ENCODE measurements at regions of chr17 and their contacts with region 1.

Region 1: DNA sequence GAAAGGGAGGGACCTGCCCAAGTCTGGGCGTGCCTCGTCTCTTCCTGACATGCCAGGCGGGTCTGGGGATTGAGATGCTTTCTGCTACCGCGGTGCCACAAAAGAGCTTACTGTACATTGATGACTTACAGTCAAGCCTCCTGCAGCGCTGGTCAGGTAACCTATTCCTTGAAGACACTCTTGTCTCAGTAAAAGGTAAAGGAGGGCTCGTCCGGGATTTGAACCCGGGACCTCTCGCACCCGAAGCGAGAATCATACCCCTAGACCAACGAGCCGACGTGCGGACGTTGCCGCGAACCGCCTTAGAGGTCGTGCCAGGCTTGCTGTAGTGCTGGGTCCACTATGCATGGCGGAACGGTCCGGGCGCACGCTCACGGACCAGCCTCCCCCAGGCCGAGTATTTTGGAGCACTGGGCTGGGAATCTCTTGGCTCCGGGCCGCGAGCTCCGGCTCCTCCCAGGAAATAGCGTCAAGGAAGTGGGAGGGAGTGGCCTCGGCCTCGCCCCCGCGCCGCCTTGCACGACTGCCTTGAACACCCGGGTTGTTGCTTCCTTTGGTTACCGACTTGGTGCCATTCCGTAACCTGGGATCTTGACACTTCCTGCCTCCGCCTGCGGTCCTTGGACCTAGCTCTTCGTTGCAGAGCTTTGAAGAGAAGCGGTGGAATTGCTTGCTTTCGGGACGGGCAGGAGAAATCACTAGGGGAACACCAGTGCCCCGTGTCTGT is 12.4 kb upstream of the AURKB start:
- DNase-seq: peak; percentile 93
- ATAC-seq: peak; percentile 40
- H3K4me3 ChIP-seq: peak overlapping the region; percentile 62
- H3K27ac ChIP-seq: peak overlapping the region; percentile 85
- H3K4me1 ChIP-seq: peaks cover 9% of the 10 kb centered on the region
- H3K27me3 ChIP-seq: no peaks in the 10 kb centered on the region
- CTCF ChIP-seq: no peak
- POLR2A ChIP-seq: peak; percentile 77; the same call in 1 of the 2 replicates
- RAD21 ChIP-seq: no peak

Region 2: GRCh38 chr17:8125157-8125946 is 97.4 kb before region 1 on chr17:
- CTCF ChIA-PET with region 1: interaction called, 4 read pairs
- POLR2A ChIA-PET with region 1: no interaction called
- dilution Hi-C with region 1: loop called (anchors 25 kb)
- in situ Hi-C with region 1: loop called (anchors 5 kb)
- intact Hi-C with region 1: loop called (anchors 1 kb)
- DNase-seq: peak; percentile 60
- ATAC-seq: peak; percentile 5
- H3K4me3 ChIP-seq: peak overlapping the region; percentile 73
- H3K27ac ChIP-seq: no peak overlapping the region
- H3K4me1 ChIP-seq: peaks cover 8% of the 10 kb centered on the region
- H3K27me3 ChIP-seq: no peaks in the 10 kb centered on the region
- CTCF ChIP-seq: no peak
- POLR2A ChIP-seq: no peak
- RAD21 ChIP-seq: no peak

Region 3: DNA sequence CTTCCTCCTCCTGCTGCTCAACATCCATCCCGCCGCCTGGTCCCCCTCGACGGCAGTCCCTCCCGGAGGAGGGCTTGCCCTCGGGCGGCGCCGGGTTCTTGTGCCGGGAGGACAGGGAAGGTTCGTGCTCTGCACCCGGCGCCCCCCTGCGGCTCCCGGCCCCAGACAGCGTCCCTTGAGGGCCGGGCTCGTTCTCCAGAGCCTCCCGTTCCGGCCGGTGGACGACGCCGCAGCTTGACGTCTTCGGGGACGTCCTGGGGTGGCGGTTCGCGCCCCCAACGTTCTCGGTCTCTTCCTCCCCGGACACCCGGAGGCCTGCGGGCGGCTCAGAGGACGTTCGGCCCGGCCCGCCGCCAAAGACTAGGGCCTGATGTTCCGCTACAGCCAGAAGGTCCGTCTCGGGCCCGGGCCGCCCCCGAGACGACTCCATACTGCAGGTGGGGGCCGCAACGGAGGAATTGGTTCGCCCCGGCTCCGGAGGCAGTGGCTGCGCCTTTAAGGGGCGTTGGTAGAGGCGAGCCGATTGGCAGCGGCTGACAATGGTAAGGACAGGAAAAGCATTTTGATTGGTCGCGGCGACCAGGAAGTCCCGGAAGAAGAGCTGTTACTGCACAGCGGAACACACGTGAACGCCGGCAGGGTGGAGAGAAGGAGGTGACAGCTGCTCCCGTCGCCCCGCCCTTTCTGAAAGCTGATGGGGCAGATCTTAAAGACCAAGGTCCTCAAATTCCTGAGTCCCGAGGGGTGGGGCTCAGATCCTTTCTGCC is 32.9 kb before region 1 on chr17 and contains the start of gene BORCS6:
- CTCF ChIA-PET with region 1: interaction called, 3 read pairs
- POLR2A ChIA-PET with region 1: interaction called, 4 read pairs
- dilution Hi-C with region 1: no loop called
- in situ Hi-C with region 1: no loop called
- intact Hi-C with region 1: loop called (anchors 1 kb)
- DNase-seq: peak; percentile 98
- ATAC-seq: peak; percentile 49
- H3K4me3 ChIP-seq: peak within 1 kb of the TSS; percentile 74
- H3K27ac ChIP-seq: peak within 1 kb of the TSS; percentile 69
- H3K4me1 ChIP-seq: peaks cover 13% of the 10 kb centered on the region
- H3K27me3 ChIP-seq: no peaks in the 10 kb centered on the region
- CTCF ChIP-seq: no peak
- POLR2A ChIP-seq: peak; percentile 59
- RAD21 ChIP-seq: no peak
- total RNA-seq, gene BORCS6: 2.7 and 3.1 TPM in 2 replicates

Region 4: GRCh38 chr17:8209909-8210760 is 12.7 kb before region 1 on chr17 and contains the start of gene AURKB:
- CTCF ChIA-PET with region 1: no interaction called
- POLR2A ChIA-PET with region 1: interaction called, 3 read pairs
- dilution Hi-C with region 1: no loop called
- in situ Hi-C with region 1: no loop called
- intact Hi-C with region 1: loop called (anchors 1 kb)
- DNase-seq: peak; percentile 97
- ATAC-seq: peak; percentile 97
- H3K4me3 ChIP-seq: peak within 1 kb of the TSS; percentile 74
- H3K27ac ChIP-seq: peak within 1 kb of the TSS; percentile 83; the same call in 1 of the 2 replicates
- H3K4me1 ChIP-seq: 0 out of 2 replicates have a peak, but pooled peaks cover 7% of the 10 kb centered on the region
- H3K27me3 ChIP-seq: no peaks in the 10 kb centered on the region
- CTCF ChIP-seq: no peak
- POLR2A ChIP-seq: peak; percentile 79
- RAD21 ChIP-seq: no peak
- total RNA-seq, gene AURKB: 38.9 and 45.9 TPM in 2 replicates

Region 5: DNA sequence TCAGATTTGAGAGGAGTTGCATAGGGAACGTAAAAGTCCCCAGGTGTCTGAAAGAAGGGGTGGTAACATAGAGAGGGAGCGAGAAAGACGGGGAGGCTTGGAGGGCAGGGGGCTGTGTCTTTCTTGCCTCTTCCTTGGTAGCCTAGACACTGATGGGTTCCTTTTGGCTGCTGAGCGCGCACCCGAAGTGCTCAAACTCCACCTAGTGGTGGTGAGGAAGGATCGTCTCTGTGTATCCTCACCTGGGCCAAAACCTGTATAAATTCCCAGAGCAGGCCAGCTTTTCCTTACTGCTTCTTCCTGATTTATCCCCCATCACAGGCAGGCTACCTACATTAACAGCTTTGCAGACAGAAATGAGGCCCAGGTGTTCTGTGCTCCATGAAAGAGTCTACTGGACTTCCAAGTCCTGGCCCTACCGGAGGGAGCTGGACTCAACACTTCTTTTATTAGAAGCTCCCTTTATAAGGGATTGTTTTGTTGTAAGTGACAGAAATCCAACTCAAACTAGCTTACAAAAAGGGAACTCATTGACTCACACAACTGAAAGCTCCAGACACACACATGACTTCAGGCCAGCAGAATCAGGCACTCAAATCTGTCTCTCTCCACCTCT is 77.9 kb after region 1 on chr17:
- CTCF ChIA-PET with region 1: no interaction called
- POLR2A ChIA-PET with region 1: no interaction called
- dilution Hi-C with region 1: no loop called
- in situ Hi-C with region 1: no loop called
- intact Hi-C with region 1: loop called (anchors 1 kb)
- DNase-seq: peak; percentile 64
- ATAC-seq: peak; percentile 98
- H3K4me3 ChIP-seq: no peak overlapping the region
- H3K27ac ChIP-seq: no peak overlapping the region
- H3K4me1 ChIP-seq: no peaks in the 10 kb centered on the region
- H3K27me3 ChIP-seq: no peaks in the 10 kb centered on the region; the same call in 1 of the 2 replicates
- CTCF ChIP-seq: peak; percentile 80
- POLR2A ChIP-seq: no peak
- RAD21 ChIP-seq: peak; percentile 86